ENCODE measurements at regions of chr6 and their contacts with region 1.

Region 1: GRCh38 chr6:124961777-124962611 is at the start of gene RNF217:
- DNase-seq: peak; percentile 66 to 85
- ATAC-seq: peak; percentile 64 to 72 (median 68)
- H3K4me3 ChIP-seq: peak within 1 kb of the TSS; percentile 85
- H3K27ac ChIP-seq: peak within 1 kb of the TSS; percentile 96
- H3K4me1 ChIP-seq: peaks cover 32% of the 10 kb centered on the region
- H3K27me3 ChIP-seq: no peaks in the 10 kb centered on the region
- CTCF ChIP-seq: peak; percentile 25
- total RNA-seq, gene RNF217: 11.5 to 22.5 (median 15.5) TPM

Region 2: DNA sequence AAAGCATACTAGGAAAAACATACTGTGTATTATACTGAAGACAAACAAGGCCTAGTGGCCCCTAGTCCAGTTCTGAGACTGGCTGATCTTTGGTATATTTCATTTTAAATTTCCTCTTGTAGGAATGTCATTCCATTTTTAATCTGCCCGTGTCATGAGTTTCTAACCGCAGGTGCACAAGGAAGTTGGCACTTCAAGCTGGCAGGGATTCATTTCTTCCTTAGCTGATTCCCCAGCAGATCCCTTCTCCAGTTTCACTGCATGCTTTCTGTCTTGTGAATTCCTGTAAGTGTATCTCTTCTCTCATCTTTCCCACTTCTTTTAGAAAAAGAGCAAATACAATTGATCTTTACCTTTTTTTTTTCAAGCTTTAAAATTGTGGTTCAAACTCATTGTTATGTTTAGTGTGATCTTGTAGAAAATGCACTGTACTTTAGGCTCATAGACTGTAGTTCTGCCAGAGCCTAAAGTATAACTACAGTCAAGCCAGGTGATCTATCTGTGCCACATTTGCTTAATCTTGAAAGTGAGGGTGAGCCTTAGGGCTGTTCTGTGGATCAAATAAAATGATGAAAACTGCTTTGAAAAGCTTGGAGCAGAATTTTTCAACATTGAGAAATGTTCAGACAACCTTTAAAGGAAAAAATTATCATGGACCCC is 37.2 kb after region 1 on chr6:
- intact Hi-C with region 1: loop called in 1 of 2 experiments (anchors 5 kb)
- DNase-seq: no peak
- ATAC-seq: peak; percentile 58 to 75 (median 66)
- H3K4me3 ChIP-seq: peak overlapping the region; percentile 11
- H3K27ac ChIP-seq: peak overlapping the region; percentile 75
- H3K4me1 ChIP-seq: peaks cover 70% of the 10 kb centered on the region
- H3K27me3 ChIP-seq: no peaks in the 10 kb centered on the region
- CTCF ChIP-seq: no peak

Region 3: GRCh38 chr6:125201961-125202591 is 240.1 kb after region 1 on chr6:
- intact Hi-C with region 1: no loop called
- DNase-seq: peak; percentile 28 to 67
- ATAC-seq: no peak
- H3K4me3 ChIP-seq: no peak overlapping the region
- H3K27ac ChIP-seq: peak overlapping the region; percentile 71
- H3K4me1 ChIP-seq: peaks cover 89% of the 10 kb centered on the region
- H3K27me3 ChIP-seq: no peaks in the 10 kb centered on the region
- CTCF ChIP-seq: no peak